Vagina (tissue), 2 donors: ENCODE measurements at regions of chr6 and their contacts with region 1.

Region 1: DNA sequence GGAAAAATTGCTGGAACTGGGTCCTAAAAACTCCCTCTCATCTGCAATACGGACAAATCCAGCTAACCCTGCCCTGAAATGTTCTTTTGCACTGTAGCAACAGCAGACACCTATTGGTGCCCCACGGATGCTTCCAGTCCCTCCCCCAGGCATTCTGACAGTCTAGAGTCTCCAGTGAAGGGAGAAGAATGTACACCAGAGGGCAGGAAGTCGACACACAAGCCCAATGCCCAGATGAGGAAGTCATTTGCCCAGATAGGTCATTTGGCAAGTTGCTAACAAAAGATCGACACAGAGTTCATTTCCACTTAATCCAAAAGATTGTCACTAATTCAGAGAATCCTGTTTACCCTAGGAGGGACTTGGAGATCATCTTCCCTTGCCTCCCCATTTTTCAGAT is 293.0 kb upstream of the PRDM1 start:
- DNase-seq: no peak
- H3K4me3 ChIP-seq: no peak overlapping the region
- H3K27ac ChIP-seq: no peak overlapping the region
- H3K4me1 ChIP-seq: peaks cover 28% of the 10 kb centered on the region
- H3K27me3 ChIP-seq: no peaks in the 10 kb centered on the region
- CTCF ChIP-seq: no peak
- POLR2A ChIP-seq: no peak

Region 2: GRCh38 chr6:105272786-105273185 is 520.3 kb before region 1 on chr6:
- intact Hi-C with region 1: no loop called
- DNase-seq: no peak
- H3K4me3 ChIP-seq: no peak overlapping the region
- H3K27ac ChIP-seq: no peak overlapping the region
- H3K4me1 ChIP-seq: no peaks in the 10 kb centered on the region
- H3K27me3 ChIP-seq: no peaks in the 10 kb centered on the region
- CTCF ChIP-seq: no peak
- POLR2A ChIP-seq: no peak

Region 3: GRCh38 chr6:105608711-105609374 is 184.3 kb before region 1 on chr6:
- intact Hi-C with region 1: loop called (anchors 5 kb)
- DNase-seq: no peak
- H3K4me3 ChIP-seq: no peak overlapping the region
- H3K27ac ChIP-seq: peak overlapping the region; percentile 58
- H3K4me1 ChIP-seq: peaks cover 29% of the 10 kb centered on the region
- H3K27me3 ChIP-seq: no peaks in the 10 kb centered on the region
- CTCF ChIP-seq: no peak
- POLR2A ChIP-seq: no peak